Body of pancreas (tissue), 4 donors: ENCODE measurements at regions of chr6 and their contacts with region 1.

Region 1: GRCh38 chr6:142387997-142388815 is 86.4 kb downstream of the ADGRG6 start:
- DNase-seq: no peak
- ATAC-seq: peak; percentile 50
- H3K4me3 ChIP-seq: no peak overlapping the region
- H3K27ac ChIP-seq: no peak overlapping the region
- H3K4me1 ChIP-seq: no peaks in the 10 kb centered on the region
- H3K27me3 ChIP-seq: no peaks in the 10 kb centered on the region
- CTCF ChIP-seq: peak in 6 of 7 experiments; percentile 34 to 57 (median 52)
- POLR2A ChIP-seq: no peak

Region 2: GRCh38 chr6:142155895-142156757 is 232.1 kb before region 1 on chr6:
- intact Hi-C with region 1: loop called (anchors 10 kb)
- DNase-seq: no peak
- ATAC-seq: peak; percentile 56
- H3K4me3 ChIP-seq: no peak overlapping the region
- H3K27ac ChIP-seq: no peak overlapping the region
- H3K4me1 ChIP-seq: peaks cover 3% of the 10 kb centered on the region
- H3K27me3 ChIP-seq: no peaks in the 10 kb centered on the region
- CTCF ChIP-seq: peak in 6 of 7 experiments; percentile 29 to 49 (median 42)
- POLR2A ChIP-seq: no peak

Region 3: DNA sequence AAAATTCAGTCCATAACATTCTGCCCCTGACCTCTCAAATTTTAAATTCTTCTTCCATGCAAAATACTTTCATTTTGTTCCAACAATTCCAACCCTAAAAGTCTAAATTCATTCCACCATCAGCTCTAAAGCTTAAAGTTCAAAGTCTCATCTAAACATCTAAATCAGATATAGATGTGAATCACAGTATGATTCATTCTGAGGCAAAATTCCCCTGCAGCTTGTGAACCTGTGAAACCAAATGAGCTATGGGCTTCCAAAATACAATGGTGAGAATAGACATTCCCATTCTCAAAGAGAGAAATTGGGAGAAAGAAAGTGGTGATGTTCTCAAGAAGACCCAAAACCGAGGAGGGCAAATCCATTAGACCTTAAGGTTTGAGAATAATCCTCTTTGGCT is 246.9 kb after region 1 on chr6:
- intact Hi-C with region 1: no loop called
- DNase-seq: no peak
- ATAC-seq: no peak
- H3K4me3 ChIP-seq: no peak overlapping the region
- H3K27ac ChIP-seq: no peak overlapping the region
- H3K4me1 ChIP-seq: no peaks in the 10 kb centered on the region
- H3K27me3 ChIP-seq: no peaks in the 10 kb centered on the region
- CTCF ChIP-seq: no peak
- POLR2A ChIP-seq: no peak